Lower leg skin (tissue), 4 donors: ENCODE measurements at regions of chr9 and their contacts with region 1.

Region 1: GRCh38 chr9:113853324-113853723 is 22.8 kb upstream of the ZNF618 start:
- DNase-seq: no peak
- H3K4me3 ChIP-seq: no peak overlapping the region
- CTCF ChIP-seq: no peak
- POLR2A ChIP-seq: no peak

Region 2: DNA sequence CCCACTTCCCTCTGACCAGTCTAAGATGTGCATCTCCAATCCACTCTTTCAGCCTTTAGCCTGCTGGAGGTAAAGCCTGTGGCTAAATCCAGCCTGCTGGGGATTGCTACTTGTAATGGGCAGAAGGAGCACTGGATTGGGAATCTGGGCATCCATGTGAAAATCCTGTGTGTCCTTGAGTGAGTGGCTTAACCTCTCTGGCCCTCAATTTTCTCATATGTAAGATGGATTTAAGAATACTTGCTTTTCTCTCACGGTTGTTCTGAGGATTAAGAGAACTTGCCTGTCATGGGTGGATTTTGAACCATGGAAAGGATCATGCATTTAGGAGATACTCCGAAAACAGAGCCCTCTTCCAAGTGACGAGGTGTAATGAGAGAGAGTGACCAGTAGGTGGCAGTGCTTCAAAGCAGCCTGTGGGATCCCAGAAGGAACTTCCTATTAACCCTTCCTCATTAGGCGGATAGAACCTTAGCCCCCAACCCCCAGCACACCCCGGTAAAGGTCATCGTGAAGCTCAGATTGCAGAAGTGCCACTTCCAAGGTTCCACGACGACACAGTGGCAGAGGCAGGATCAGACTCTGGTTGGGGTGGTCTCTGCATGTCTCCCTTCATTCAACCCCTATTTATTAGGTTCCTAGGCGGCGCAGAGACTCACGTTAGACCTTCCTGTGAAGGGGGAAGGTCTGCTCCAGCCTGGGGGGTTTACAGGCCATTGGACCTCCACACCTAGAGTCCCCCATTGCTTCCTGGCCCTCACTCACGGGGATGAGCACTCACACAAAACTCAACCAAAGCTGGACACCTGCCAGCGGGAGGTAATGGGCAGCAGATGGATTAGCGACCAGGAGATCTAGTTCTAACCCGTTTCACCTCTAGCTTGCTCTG is 45.9 kb before region 1 on chr9:
- intact Hi-C with region 1: loop called (anchors 10 kb)
- DNase-seq: peak; percentile 39 to 87
- H3K4me3 ChIP-seq: no peak overlapping the region
- CTCF ChIP-seq: peak in 1 of 3 donors; percentile 14
- POLR2A ChIP-seq: no peak

Region 3: DNA sequence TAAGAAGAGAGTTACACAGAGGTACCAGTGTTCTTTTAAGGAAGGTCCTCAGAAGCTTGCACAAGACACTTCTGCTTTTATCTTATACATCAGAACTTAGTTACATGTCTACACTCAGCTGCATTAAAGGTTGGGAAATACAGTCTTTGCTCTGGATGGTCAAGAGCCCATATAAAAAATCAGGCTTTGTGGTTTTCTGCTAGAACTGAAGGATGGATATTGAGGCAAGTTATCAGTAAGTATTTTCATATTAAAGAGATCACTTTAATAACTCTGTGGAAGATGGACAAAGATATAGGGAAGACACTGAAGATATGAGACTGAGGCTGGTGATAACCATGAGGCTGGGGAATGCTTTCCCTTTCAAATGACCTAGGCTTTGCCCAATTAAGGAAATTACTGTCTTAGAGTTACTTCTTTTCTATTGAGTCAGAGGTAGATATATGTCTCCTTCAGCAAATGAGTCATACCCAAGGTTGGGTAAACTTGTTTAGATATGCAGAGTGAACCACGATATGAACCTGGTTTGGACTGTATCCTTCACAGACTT is 1351.7 kb after region 1 on chr9:
- intact Hi-C with region 1: no loop called
- DNase-seq: no peak
- H3K4me3 ChIP-seq: no peak overlapping the region
- CTCF ChIP-seq: no peak
- POLR2A ChIP-seq: no peak